ENCODE measurements at regions of chr12 and their contacts with region 1.

Region 1: GRCh38 chr12:13362260-13362841 is 165.8 kb downstream of the EMP1 start:
- DNase-seq: peak in 6 of 10 donors; percentile 28 to 58 (median 46)
- H3K4me3 ChIP-seq: no peak overlapping the region
- H3K27ac ChIP-seq: no peak overlapping the region
- H3K27me3 ChIP-seq: peaks cover 0 to 6% (median 0%) of the 10 kb centered on the region in 45 donors
- CTCF ChIP-seq: peak; percentile 33 to 88 (median 72)

Region 2: DNA sequence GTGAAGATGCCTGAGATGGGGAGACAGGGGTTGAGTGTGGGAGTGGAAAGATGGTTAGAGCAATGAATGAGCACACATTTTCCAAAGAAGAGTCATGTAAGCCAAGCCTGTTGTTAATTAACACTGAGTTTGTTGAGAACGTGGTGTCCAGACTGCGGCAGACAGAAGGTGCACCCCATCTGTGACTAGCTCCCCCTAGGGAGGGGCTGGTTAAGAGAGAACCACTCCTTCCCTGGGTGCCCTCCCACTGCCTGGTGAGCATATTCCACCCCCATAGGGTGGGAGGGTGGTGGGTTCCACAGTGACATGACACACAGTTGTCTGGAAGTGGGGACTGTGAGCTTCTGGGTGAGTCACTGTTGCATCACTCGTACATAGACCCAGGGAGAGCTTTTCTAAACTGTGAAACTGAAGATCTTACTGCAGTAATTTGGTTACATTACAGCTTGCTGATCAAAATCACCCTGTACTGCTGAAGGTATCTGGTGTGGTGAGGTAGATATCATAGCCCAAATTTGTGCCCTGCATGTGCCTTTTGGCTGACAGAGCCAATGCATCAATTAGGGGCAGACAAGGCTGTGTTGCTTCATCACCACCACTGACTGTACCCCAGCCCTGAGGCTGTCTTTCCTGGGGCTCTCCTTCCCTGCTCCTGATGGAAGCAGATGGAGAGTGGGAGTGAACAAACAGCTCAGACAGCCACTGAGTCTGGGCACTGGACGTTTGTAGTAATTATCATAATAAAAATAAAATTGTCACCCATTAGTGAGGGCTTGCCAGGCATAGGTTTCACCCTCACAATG is 14.9 kb before region 1 on chr12:
- intact Hi-C with region 1: loop called in 1 of 2 experiments (anchors 1 kb)
- DNase-seq: peak in 8 of 10 donors; percentile 36 to 85 (median 61)
- H3K4me3 ChIP-seq: no peak overlapping the region
- H3K27ac ChIP-seq: peak overlapping the region in 17 of 59 donors; percentile 4 to 69 (median 37)
- H3K27me3 ChIP-seq: no peaks in the 10 kb centered on the region
- CTCF ChIP-seq: no peak

Region 3: GRCh38 chr12:13452955-13453570 is 90.7 kb after region 1 on chr12:
- intact Hi-C with region 1: loop called in 1 of 2 experiments (anchors 5 kb)
- DNase-seq: peak in 3 of 10 donors; percentile 32 to 52 (median 50)
- H3K4me3 ChIP-seq: peak overlapping the region in 1 of 59 donors; percentile 18
- H3K27ac ChIP-seq: peak overlapping the region in 25 of 59 donors; percentile 12 to 70 (median 49)
- H3K27me3 ChIP-seq: no peaks in the 10 kb centered on the region
- CTCF ChIP-seq: peak in 26 of 56 donors; percentile 7 to 57 (median 18)

Region 4: DNA sequence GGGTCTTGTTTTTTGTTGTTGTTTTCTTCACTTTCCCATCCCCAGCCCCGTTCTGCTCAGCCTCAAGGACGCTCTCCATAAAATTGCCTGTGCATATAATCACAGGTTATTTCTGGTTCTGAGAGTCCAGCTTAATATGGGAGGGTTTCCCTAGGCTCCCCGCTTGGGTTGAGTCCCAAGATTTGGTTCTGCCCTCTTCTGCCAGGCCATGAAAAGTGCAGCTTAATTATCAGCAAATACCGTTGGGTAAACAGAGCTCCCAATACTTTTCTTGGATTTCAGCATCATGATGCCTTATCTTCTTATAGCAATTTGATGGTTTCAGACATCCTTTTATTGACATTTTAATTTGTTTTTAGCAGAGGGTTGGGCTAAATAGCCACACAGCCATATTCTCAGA is 543.5 kb after region 1 on chr12:
- intact Hi-C with region 1: no loop called
- DNase-seq: no peak
- H3K4me3 ChIP-seq: no peak overlapping the region
- H3K27ac ChIP-seq: no peak overlapping the region
- H3K27me3 ChIP-seq: no peaks in the 10 kb centered on the region
- CTCF ChIP-seq: no peak

Measured in dorsolateral prefrontal cortex (tissue), 120 donors.